Natural killer cell (primary cell): ENCODE measurements at regions of chr2 and their contacts with region 1.

Region 1: GRCh38 chr2:109128048-109128465 is 948 bp upstream of the SH3RF3 start:
- DNase-seq: peak; percentile 52 to 80
- ATAC-seq: peak; percentile 43 to 70 (median 62)
- H3K4me3 ChIP-seq: peak overlapping the region; percentile 43
- H3K4me3 Mint-ChIP-seq: peak overlapping the region; percentile 66
- H3K27ac ChIP-seq: no peak overlapping the region
- H3K27ac Mint-ChIP-seq: no peak overlapping the region
- H3K4me1 ChIP-seq: peaks cover 15% of the 10 kb centered on the region
- H3K4me1 Mint-ChIP-seq: peaks cover 5 to 19% of the 10 kb centered on the region in 2 donors
- H3K27me3 ChIP-seq: peaks cover 27% of the 10 kb centered on the region
- H3K27me3 Mint-ChIP-seq: peaks cover 27 to 53% of the 10 kb centered on the region in 2 donors
- CTCF ChIP-seq: peak; percentile 90

Region 2: GRCh38 chr2:108971661-108972566 is 156.1 kb before region 1 on chr2:
- intact Hi-C with region 1: no loop called
- DNase-seq: no peak
- ATAC-seq: no peak
- H3K4me3 ChIP-seq: no peak overlapping the region
- H3K4me3 Mint-ChIP-seq: no peak overlapping the region
- H3K27ac ChIP-seq: no peak overlapping the region
- H3K27ac Mint-ChIP-seq: no peak overlapping the region
- H3K4me1 ChIP-seq: peaks cover 4% of the 10 kb centered on the region
- H3K4me1 Mint-ChIP-seq: no peaks in the 10 kb centered on the region
- H3K27me3 ChIP-seq: no peaks in the 10 kb centered on the region
- H3K27me3 Mint-ChIP-seq: peaks cover 0 to 5% of the 10 kb centered on the region in 2 donors
- CTCF ChIP-seq: no peak

Region 3: GRCh38 chr2:109348671-109349550 is 220.9 kb after region 1 on chr2:
- intact Hi-C with region 1: loop called (anchors 5 kb)
- DNase-seq: peak; percentile 26 to 80
- ATAC-seq: peak; percentile 90 to 99 (median 96)
- H3K4me3 ChIP-seq: no peak overlapping the region
- H3K4me3 Mint-ChIP-seq: peak overlapping the region; percentile 70
- H3K27ac ChIP-seq: peak overlapping the region; percentile 41
- H3K27ac Mint-ChIP-seq: peak overlapping the region; percentile 72 to 84
- H3K4me1 ChIP-seq: peaks cover 40% of the 10 kb centered on the region
- H3K4me1 Mint-ChIP-seq: peaks cover 29 to 32% of the 10 kb centered on the region in 2 donors
- H3K27me3 ChIP-seq: no peaks in the 10 kb centered on the region
- H3K27me3 Mint-ChIP-seq: no peaks in the 10 kb centered on the region
- CTCF ChIP-seq: peak; percentile 13

Region 4: GRCh38 chr2:109510136-109511028 is 382.3 kb after region 1 on chr2:
- intact Hi-C with region 1: loop called (anchors 1 kb)
- DNase-seq: peak; percentile 70 to 87
- ATAC-seq: peak; percentile 57 to 91 (median 76)
- H3K4me3 ChIP-seq: no peak overlapping the region
- H3K4me3 Mint-ChIP-seq: no peak overlapping the region
- H3K27ac ChIP-seq: no peak overlapping the region
- H3K27ac Mint-ChIP-seq: no peak overlapping the region
- H3K4me1 ChIP-seq: peaks cover 16% of the 10 kb centered on the region
- H3K4me1 Mint-ChIP-seq: peaks cover 13 to 17% of the 10 kb centered on the region in 2 donors
- H3K27me3 ChIP-seq: peaks cover 4% of the 10 kb centered on the region
- H3K27me3 Mint-ChIP-seq: peaks cover 17 to 18% of the 10 kb centered on the region in 2 donors
- CTCF ChIP-seq: peak; percentile 90